Gastrocnemius medialis (tissue), 4 donors: ENCODE measurements at regions of chr7 and their contacts with region 1.

Region 1: DNA sequence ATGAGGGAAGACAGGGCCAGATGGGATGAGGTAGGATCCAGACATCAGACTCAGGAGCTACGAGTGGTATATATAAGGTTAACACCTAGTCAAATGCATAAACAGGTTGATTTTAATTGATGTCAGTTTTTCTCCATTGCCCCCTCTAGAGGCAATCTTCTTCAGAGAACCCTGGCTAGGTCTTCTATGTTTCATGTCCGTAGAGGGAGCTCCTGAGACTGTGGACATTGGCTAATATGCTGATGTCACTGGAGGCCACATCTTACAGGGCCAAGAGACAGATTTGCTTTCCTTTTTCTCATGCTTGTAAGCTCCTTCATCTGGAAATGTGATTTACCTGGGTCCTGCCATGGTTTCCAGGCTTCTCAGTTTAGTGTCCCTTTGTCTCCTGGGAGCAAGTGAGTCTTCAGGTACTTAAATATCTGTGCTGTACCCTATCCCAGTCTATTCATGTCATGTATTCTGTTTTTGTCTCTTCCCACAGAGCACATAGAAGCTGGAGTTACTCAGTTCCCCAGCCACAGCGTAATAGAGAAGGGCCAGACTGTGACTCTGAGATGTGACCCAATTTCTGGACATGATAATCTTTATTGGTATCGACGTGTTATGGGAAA is 161.6 kb upstream of the PRSS1 start:
- DNase-seq: peak in 1 of 2 donors; percentile 57
- ATAC-seq: peak; percentile 83 to 88
- H3K4me3 ChIP-seq: no peak overlapping the region
- H3K27ac ChIP-seq: peak overlapping the region; percentile 35 to 69 (median 58)
- H3K4me1 ChIP-seq: peaks cover 13 to 16% of the 10 kb centered on the region in 2 donors
- H3K27me3 ChIP-seq: no peaks in the 10 kb centered on the region
- CTCF ChIP-seq: peak in 4 of 5 experiments; percentile 18 to 42 (median 34)
- POLR2A ChIP-seq: no peak

Region 2: DNA sequence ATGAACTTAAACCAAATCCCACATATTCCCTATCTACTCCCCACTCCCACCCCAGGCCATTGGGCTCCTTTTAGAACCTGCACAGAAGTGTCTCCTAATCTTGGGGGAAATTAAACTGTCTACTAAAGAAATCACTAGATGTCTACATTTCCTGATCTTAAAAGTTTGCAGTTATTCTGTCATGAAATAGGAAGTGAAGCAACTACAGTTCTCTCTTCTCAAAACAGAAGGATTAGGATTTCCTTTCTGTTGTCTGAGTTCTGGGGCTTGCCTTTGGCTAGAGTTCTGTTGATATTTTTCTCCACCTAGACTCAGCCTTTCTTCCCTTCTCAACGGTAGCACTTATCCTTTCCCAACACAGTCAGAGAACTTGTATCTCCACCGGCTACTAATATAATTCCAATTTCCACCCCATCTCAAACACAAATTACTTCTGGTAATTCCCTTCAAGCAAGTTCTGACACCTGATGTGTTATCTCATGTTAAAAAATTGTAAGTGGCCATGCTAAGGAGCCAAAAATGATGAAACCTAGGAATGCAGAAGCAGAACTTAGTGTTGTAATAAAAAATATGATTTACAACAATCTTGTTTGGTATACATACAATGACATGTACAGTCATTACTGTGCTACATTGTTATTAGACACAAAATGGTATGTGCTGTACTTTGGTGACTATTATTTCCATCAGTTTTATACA is 659.4 kb before region 1 on chr7:
- in situ Hi-C with region 1: no loop called
- intact Hi-C with region 1: no loop called
- DNase-seq: no peak
- ATAC-seq: no peak
- H3K4me3 ChIP-seq: no peak overlapping the region
- H3K27ac ChIP-seq: no peak overlapping the region
- H3K4me1 ChIP-seq: no peaks in the 10 kb centered on the region
- H3K27me3 ChIP-seq: no peaks in the 10 kb centered on the region
- CTCF ChIP-seq: no peak
- POLR2A ChIP-seq: no peak

Region 3: GRCh38 chr7:142134909-142135308 is 452.8 kb before region 1 on chr7:
- in situ Hi-C with region 1: no loop called
- intact Hi-C with region 1: no loop called
- DNase-seq: no peak
- ATAC-seq: no peak
- H3K4me3 ChIP-seq: no peak overlapping the region
- H3K27ac ChIP-seq: no peak overlapping the region
- H3K4me1 ChIP-seq: no peaks in the 10 kb centered on the region
- H3K27me3 ChIP-seq: no peaks in the 10 kb centered on the region
- CTCF ChIP-seq: no peak
- POLR2A ChIP-seq: no peak

Region 4: GRCh38 chr7:142508258-142508689 is 79.4 kb before region 1 on chr7:
- in situ Hi-C with region 1: no loop called
- intact Hi-C with region 1: no loop called
- DNase-seq: no peak
- ATAC-seq: peak; percentile 74 to 82
- H3K4me3 ChIP-seq: no peak overlapping the region
- H3K27ac ChIP-seq: peak overlapping the region in 1 of 4 donors; percentile 54
- H3K4me1 ChIP-seq: peaks cover 0 to 5% of the 10 kb centered on the region in 2 donors
- H3K27me3 ChIP-seq: no peaks in the 10 kb centered on the region
- CTCF ChIP-seq: no peak
- POLR2A ChIP-seq: no peak

Region 5: GRCh38 chr7:142535123-142535779 is 52.4 kb before region 1 on chr7:
- in situ Hi-C with region 1: no loop called
- intact Hi-C with region 1: loop called (anchors 10 kb)
- DNase-seq: peak; percentile 35 to 50
- ATAC-seq: peak; percentile 94 to 99
- H3K4me3 ChIP-seq: no peak overlapping the region
- H3K27ac ChIP-seq: no peak overlapping the region
- H3K4me1 ChIP-seq: no peaks in the 10 kb centered on the region
- H3K27me3 ChIP-seq: no peaks in the 10 kb centered on the region
- CTCF ChIP-seq: peak; percentile 60 to 82 (median 75)
- POLR2A ChIP-seq: no peak

Region 6: DNA sequence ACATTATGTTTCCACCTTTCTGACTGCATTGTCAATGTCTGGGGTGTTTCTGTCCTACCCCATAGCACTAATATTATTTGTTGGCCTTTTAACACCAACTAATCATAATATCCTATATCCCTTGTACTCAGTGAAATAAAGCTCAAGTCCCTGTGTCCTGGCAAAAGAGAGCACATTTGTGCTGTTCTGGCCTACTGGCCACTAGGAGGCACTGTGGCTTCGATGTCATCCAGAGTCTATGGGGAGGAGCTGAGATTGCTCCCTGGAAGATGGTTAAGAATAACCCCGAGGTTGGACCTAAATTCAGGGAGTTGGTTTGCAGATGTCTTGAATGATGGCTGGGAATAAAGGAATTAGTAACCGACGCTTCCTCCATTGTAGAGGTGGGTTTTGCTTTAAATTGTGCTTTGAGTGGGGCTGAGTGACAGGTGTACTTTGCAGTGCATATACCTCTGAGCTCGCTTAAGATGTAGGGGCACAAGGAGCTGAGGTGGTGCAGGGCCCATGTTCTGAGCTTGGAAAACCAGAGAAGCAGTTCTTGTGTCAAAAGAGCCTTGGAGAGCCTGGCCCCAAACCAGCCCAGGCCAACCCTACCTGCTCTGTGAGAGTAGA is 29.6 kb before region 1 on chr7:
- in situ Hi-C with region 1: no loop called
- intact Hi-C with region 1: loop called (anchors 2 kb)
- DNase-seq: peak in 1 of 2 donors; percentile 32
- ATAC-seq: peak in 1 of 2 donors; percentile 55
- H3K4me3 ChIP-seq: no peak overlapping the region
- H3K27ac ChIP-seq: no peak overlapping the region
- H3K4me1 ChIP-seq: peaks cover 3 to 15% of the 10 kb centered on the region in 2 donors
- H3K27me3 ChIP-seq: no peaks in the 10 kb centered on the region
- CTCF ChIP-seq: peak in 4 of 5 experiments; percentile 20 to 45 (median 29)
- POLR2A ChIP-seq: no peak

Region 7: DNA sequence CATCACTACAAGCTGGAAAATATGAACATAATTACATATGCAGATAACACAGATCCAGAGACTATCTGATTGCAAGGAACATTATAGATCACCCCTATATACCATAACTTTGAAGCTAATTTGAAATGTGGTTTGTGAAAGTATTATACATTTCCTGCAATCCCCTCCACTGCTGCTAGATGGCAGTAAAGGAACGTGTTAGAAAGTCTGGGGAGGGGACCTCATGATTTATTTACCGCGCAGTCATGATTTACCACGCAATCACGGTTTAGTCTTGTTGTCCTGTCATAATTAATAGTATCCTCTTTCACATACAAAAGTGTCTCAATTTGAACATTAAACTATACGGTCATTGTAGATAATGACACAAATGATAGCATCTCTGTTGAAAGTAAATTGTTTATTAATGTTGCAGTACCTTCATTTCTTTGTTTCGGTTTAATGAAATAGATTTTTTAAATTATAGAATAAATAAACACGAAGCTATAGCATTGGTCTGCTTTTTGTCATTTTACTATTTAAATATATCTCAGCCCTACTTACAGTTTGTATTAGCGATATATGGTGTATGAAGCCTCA is 16.3 kb after region 1 on chr7:
- in situ Hi-C with region 1: no loop called
- intact Hi-C with region 1: no loop called
- DNase-seq: peak; percentile 32 to 38
- ATAC-seq: peak; percentile 38 to 75
- H3K4me3 ChIP-seq: peak overlapping the region in 3 of 4 donors; percentile 12 to 36 (median 14)
- H3K27ac ChIP-seq: peak overlapping the region in 2 of 4 donors; percentile 2 to 20
- H3K4me1 ChIP-seq: peaks cover 6 to 11% of the 10 kb centered on the region in 2 donors
- H3K27me3 ChIP-seq: no peaks in the 10 kb centered on the region
- CTCF ChIP-seq: peak; percentile 71 to 89 (median 86)
- POLR2A ChIP-seq: no peak